ENCODE measurements at regions of chr20 and their contacts with region 1.

Region 1: DNA sequence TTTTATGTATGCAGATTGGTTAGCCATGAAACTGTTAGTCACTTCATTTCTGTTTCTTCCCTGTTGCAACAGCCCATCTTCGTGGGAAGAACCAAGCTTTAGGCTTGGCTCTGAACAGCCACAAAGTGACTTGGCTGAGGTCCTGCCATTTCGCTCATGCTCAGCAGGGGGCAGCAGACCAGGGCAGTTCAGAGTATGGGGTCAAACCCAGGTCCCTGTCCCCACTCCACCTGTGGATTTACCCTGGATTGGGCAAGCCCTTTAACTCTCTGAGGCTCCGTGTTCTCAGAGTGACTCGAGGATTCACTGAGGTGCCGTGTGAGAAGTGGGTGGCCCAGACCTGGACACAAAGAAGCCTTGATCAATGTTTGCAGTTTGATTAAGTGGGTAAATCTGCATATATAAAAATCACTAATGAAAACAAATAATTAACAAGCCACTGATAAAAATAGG is 19.8 kb upstream of the MAP1LC3A start:
- DNase-seq: no peak
- ATAC-seq: peak; percentile 89
- H3K4me3 ChIP-seq: no peak overlapping the region
- H3K27ac ChIP-seq: no peak overlapping the region
- H3K4me1 ChIP-seq: peaks cover 0 to 4% of the 10 kb centered on the region in 2 donors
- H3K27me3 ChIP-seq: no peaks in the 10 kb centered on the region
- CTCF ChIP-seq: peak; percentile 77 to 79

Region 2: DNA sequence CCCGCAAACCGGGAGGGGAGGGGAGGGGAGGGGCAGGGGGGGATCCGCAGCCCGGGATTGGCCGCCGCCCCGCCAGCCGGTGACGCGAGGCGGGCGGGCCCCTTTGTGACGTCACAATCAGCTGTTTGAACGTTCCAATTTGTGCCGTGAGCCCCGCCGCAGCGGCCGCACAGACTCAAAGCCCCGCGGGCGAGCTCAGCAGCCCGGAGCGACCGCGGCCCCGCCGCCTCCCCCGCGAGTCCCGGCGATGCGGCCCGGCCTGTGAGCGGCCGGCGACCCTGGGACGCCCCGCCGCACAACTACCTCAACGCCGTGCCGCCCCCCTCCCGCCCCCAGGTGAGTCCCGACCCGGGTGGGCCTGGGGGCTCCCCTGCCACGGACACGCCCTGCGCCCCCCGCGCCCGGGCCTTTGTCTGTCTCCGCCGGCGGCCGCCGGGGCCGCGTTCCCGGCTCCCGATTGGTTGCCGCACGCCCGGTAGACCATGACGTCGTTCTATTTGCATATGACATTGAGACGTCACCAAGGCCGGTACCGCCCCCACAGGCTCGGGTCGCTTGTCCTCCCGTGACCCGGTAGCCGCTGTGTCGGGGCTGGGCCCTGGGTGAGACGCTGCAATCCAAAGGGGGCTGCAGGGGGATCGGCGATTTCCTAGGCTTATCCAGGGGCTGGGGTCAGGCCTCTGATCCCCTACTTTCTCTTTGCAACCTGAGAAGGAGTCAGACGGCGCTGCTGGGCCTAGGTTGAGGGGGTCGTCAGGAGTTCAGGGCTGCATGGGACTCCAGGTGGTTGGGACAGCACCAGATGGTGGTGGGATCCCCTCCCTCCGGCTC is 165.7 kb after region 1 on chr20 and contains the start of gene TP53INP2:
- intact Hi-C with region 1: loop called in 1 of 2 experiments (anchors 10 kb)
- DNase-seq: peak; percentile 79 to 95 (median 94)
- ATAC-seq: peak; percentile 78
- H3K4me3 ChIP-seq: peak within 1 kb of the TSS; percentile 72 to 76
- H3K27ac ChIP-seq: peak within 1 kb of the TSS; percentile 100
- H3K4me1 ChIP-seq: peaks cover 9 to 38% of the 10 kb centered on the region in 2 donors
- H3K27me3 ChIP-seq: no peaks in the 10 kb centered on the region
- CTCF ChIP-seq: no peak
- polyA plus RNA-seq, gene TP53INP2: 5.8 to 7.5 (median 6.6) TPM